Ovary (tissue), 10 donors: ENCODE measurements at regions of chr12 and their contacts with region 1.

Region 1: GRCh38 chr12:24152270-24152669 is 202.8 kb upstream of the SOX5 start:
- DNase-seq: no peak
- H3K4me3 ChIP-seq: no peak overlapping the region
- H3K27ac ChIP-seq: no peak overlapping the region
- H3K4me1 ChIP-seq: peaks cover 2% of the 10 kb centered on the region
- H3K27me3 ChIP-seq: no peaks in the 10 kb centered on the region
- CTCF ChIP-seq: no peak
- EP300 ChIP-seq: no peak
- POLR2A ChIP-seq: no peak

Region 2: GRCh38 chr12:22986997-22987396 is 1165.3 kb before region 1 on chr12:
- intact Hi-C with region 1: loop called in 1 of 4 experiments (anchors 5 kb)
- DNase-seq: no peak
- H3K4me3 ChIP-seq: no peak overlapping the region
- H3K27ac ChIP-seq: no peak overlapping the region
- H3K4me1 ChIP-seq: no peaks in the 10 kb centered on the region
- H3K27me3 ChIP-seq: no peaks in the 10 kb centered on the region
- CTCF ChIP-seq: no peak
- EP300 ChIP-seq: no peak
- POLR2A ChIP-seq: no peak